ENCODE measurements at regions of chr10 and their contacts with region 1.

Region 1: GRCh38 chr10:103859161-103860086 is 4.0 kb upstream of the SH3PXD2A start:
- DNase-seq: no peak
- H3K4me3 ChIP-seq: no peak overlapping the region
- H3K27ac ChIP-seq: no peak overlapping the region
- H3K4me1 ChIP-seq: peaks cover 15% of the 10 kb centered on the region
- H3K27me3 ChIP-seq: no peaks in the 10 kb centered on the region
- CTCF ChIP-seq: peak; percentile 45 to 81 (median 79)
- POLR2A ChIP-seq: no peak

Region 2: DNA sequence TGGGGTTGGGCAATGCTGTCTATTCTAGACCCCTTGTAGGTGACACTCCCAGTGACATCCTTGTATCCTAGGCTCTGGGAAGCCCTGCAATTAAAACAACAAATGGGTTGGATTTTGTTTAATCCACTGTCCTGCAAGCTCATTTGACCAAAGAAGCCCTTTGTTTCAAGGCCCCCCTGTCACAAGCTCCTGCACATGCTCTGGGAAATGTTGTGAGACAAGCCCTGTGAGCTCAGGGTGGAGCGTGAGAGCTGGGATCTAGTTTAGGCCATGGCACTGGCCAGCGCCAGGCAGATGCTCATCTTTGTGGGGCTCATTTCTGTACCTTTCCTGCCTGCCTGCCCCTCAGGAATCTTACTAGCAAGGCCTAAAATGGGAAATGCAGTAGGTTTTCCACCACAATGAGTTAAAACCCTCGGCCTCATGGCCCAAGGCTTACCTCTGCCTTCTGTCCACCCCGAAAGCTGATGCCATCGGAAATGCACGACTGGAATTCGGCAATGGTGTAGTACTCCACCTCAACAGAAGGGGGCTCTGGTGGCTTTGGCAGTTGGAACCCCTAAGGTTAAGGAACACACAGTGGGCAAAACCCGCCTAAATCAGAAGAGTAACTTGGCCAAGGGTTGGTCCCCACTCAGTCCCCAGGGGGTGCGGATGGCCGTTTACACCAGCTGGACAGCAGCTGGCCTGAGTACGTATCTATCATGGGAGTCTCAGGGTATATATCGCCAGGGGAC is 253.9 kb before region 1 on chr10:
- intact Hi-C with region 1: loop called (anchors 5 kb)
- DNase-seq: no peak
- H3K4me3 ChIP-seq: no peak overlapping the region
- H3K27ac ChIP-seq: peak overlapping the region; percentile 72
- H3K4me1 ChIP-seq: peaks cover 18% of the 10 kb centered on the region
- H3K27me3 ChIP-seq: no peaks in the 10 kb centered on the region
- CTCF ChIP-seq: peak; percentile 46 to 68 (median 55)
- POLR2A ChIP-seq: no peak

Region 3: DNA sequence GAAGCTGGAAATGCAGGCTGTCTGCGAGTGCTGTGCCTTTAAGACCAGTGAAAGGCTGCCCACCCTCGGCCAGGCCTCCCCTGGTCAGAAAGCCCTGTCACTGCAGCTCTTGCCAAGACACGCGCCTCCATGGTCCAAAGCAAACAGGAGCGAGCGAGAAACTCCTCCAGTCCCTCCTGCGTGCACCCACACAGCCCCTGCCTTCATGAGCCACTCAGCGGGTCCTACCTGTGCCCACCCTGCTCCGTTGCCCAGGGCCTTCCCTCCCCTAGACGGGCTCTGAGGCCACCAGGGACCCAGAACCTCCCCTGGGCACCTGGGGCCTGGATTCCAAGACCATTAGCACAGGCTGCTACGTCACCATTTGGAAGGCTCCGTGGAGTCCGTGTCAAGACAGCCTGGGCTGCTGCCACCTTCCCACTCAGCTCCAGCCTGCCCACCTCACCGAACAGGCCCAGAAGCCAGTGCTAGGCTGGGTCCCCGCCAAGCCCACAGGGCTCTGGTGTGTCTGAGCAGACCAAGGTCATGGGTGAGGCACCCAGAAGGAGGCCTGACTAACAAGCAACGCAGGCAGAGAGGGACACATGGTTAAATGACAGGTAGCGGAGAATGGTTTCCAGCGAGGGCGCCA is 221.4 kb before region 1 on chr10:
- intact Hi-C with region 1: no loop called
- DNase-seq: no peak
- H3K4me3 ChIP-seq: peak overlapping the region; percentile 7 to 25
- H3K27ac ChIP-seq: peak overlapping the region; percentile 87
- H3K4me1 ChIP-seq: peaks cover 75% of the 10 kb centered on the region
- H3K27me3 ChIP-seq: no peaks in the 10 kb centered on the region
- CTCF ChIP-seq: no peak
- POLR2A ChIP-seq: no peak

Region 4: GRCh38 chr10:103712570-103713498 is 146.6 kb before region 1 on chr10:
- intact Hi-C with region 1: loop called (anchors 5 kb)
- DNase-seq: no peak
- H3K4me3 ChIP-seq: no peak overlapping the region
- H3K27ac ChIP-seq: no peak overlapping the region
- H3K4me1 ChIP-seq: peaks cover 32% of the 10 kb centered on the region
- H3K27me3 ChIP-seq: no peaks in the 10 kb centered on the region
- CTCF ChIP-seq: peak; percentile 86 to 97 (median 96)
- POLR2A ChIP-seq: no peak

Measured in vagina (tissue), 2 donors.